Activated CD8-positive, alpha-beta T cell treated with anti-CD3 and anti-CD28 coated beads, Interleukin-2, amount 10 ng/mL, durations not matched to agents 7 days and 5 days (primary cell): ENCODE measurements at regions of chr17 and their contacts with region 1.

Region 1: DNA sequence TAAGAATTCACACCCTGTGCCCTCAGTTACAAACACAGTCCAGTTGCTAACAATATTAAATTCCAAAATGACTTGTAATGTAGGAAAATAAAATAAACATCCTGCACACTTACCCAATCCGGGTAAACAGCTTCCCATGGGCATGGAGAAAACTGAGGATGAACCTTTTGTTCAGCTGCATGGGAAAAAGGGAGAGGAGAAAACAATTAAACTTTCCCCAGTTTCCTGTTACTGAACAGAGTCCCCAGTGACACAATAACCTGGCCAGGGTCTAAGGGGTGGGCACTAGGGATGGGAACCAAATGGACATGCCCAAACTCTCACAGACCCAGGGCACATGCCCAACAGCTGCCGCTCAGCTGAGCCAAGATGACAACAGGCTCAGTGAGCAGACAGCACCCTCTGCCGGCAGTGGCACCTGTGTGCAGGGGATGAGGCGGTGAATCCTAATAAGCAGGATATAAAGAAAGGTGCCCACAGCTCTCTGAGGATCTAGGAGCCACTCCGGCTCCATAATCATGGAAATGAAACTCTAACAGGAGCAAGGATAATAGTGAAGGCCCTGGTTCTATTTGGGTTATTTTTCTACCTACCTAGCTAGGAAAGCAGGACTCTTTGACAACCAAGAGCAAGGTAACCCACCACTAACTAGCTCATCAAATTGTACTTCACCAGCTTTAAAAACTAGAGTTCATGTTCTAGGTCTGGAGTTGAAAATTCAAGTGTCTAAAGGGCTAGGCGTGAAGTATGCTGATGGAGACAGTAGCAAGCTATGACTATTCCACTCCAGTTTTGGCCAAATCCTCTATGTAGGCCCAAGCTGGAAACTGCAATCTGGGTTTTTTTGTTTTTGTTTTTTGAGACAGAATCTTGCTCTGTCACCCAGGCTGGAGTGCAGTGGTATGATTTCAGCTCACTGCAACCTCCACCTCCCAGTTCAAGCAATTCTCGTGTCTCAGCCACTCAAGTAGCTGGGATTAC is 58.8 kb downstream of the SMG6 start:
- DNase-seq: peak; percentile 88
- ATAC-seq: peak; percentile 93
- H3K4me3 Mint-ChIP-seq: no peak overlapping the region
- H3K27ac Mint-ChIP-seq: peak overlapping the region; percentile 72
- H3K4me1 Mint-ChIP-seq: peaks cover 86% of the 10 kb centered on the region
- H3K27me3 Mint-ChIP-seq: no peaks in the 10 kb centered on the region

Region 2: GRCh38 chr17:2070241-2071023 is 174.4 kb before region 1 on chr17:
- CTCF ChIA-PET with region 1: interaction called, 37 read pairs
- POLR2A ChIA-PET with region 1: interaction called, 4 read pairs
- DNase-seq: peak; percentile 78
- ATAC-seq: peak; percentile 82
- H3K4me3 Mint-ChIP-seq: peak overlapping the region; percentile 16
- H3K27ac Mint-ChIP-seq: peak overlapping the region; percentile 84
- H3K4me1 Mint-ChIP-seq: peaks cover 67% of the 10 kb centered on the region
- H3K27me3 Mint-ChIP-seq: no peaks in the 10 kb centered on the region

Region 3: GRCh38 chr17:2122641-2123302 is 122.1 kb before region 1 on chr17:
- CTCF ChIA-PET with region 1: interaction called, 13 read pairs
- POLR2A ChIA-PET with region 1: interaction called, 4 read pairs
- DNase-seq: no peak
- ATAC-seq: peak; percentile 57
- H3K4me3 Mint-ChIP-seq: no peak overlapping the region
- H3K27ac Mint-ChIP-seq: peak overlapping the region; percentile 77
- H3K4me1 Mint-ChIP-seq: peaks cover 27% of the 10 kb centered on the region
- H3K27me3 Mint-ChIP-seq: no peaks in the 10 kb centered on the region

Region 4: GRCh38 chr17:2192367-2193057 is 52.3 kb before region 1 on chr17:
- CTCF ChIA-PET with region 1: interaction called, 10 read pairs
- POLR2A ChIA-PET with region 1: no interaction called
- DNase-seq: peak; percentile 80
- ATAC-seq: peak; percentile 93
- H3K4me3 Mint-ChIP-seq: peak overlapping the region; percentile 52
- H3K27ac Mint-ChIP-seq: peak overlapping the region; percentile 83
- H3K4me1 Mint-ChIP-seq: peaks cover 80% of the 10 kb centered on the region
- H3K27me3 Mint-ChIP-seq: no peaks in the 10 kb centered on the region

Region 5: DNA sequence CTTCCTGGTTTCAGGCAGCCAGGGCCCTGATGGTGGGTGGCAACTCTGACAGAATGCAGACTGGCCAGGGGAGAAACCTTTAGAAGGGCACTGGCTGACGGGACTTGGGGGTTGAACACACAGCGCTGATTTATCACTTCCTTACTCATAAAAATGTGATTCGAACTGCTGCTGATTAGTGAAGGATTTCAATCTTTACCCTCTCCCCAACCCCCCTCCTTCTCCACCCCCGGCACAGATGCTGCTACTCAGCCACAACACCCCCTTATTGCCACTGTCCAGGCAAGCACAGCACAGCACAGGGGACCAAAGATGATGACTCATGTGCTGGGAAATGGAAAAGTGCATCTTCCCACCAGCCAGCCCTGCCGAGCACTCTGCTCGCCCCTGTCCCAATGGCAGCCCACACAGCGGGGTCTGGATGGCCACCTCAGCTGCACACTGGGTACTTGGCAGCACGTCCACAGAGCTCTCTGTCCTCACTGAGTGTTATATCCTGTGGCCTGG is 11.3 kb before region 1 on chr17:
- CTCF ChIA-PET with region 1: interaction called, 33 read pairs
- POLR2A ChIA-PET with region 1: no interaction called
- DNase-seq: no peak
- ATAC-seq: no peak
- H3K4me3 Mint-ChIP-seq: no peak overlapping the region
- H3K27ac Mint-ChIP-seq: peak overlapping the region; percentile 69
- H3K4me1 Mint-ChIP-seq: peaks cover 78% of the 10 kb centered on the region
- H3K27me3 Mint-ChIP-seq: no peaks in the 10 kb centered on the region

Region 6: DNA sequence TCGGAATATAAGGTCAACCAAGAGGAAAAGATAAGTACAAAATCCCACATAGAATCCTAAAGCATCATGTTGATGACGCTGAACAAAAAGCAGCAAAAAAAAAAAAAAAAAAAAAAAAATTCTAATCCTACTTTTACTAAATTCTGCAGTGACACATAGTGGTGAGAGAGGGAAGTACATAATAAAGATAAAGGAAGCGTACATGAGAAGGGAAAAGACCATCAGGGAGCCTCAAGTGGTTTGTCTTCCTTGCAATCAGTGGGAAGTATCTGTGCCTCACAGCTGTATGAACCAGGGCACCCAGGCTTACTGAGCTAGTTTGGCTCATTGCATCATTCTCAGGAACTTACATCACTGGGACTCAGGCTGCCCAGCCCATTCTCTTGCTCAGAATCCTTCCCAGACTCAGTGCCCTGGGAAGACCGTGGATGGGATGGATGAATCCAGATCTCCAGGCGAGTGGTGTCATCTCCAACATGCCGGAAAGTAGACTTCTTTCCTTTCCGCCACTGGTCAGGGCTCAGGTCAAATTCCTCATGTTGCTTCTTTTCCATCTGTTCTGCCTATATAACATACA is 37.5 kb after region 1 on chr17:
- CTCF ChIA-PET with region 1: interaction called, 61 read pairs
- POLR2A ChIA-PET with region 1: interaction called, 4 read pairs
- DNase-seq: no peak
- ATAC-seq: peak; percentile 54
- H3K4me3 Mint-ChIP-seq: no peak overlapping the region
- H3K27ac Mint-ChIP-seq: peak overlapping the region; percentile 76
- H3K4me1 Mint-ChIP-seq: peaks cover 50% of the 10 kb centered on the region
- H3K27me3 Mint-ChIP-seq: no peaks in the 10 kb centered on the region

Region 7: GRCh38 chr17:2323629-2324314 is 78.9 kb after region 1 on chr17:
- CTCF ChIA-PET with region 1: no interaction called
- POLR2A ChIA-PET with region 1: no interaction called
- DNase-seq: no peak
- ATAC-seq: no peak
- H3K4me3 Mint-ChIP-seq: no peak overlapping the region
- H3K27ac Mint-ChIP-seq: peak overlapping the region; percentile 67
- H3K4me1 Mint-ChIP-seq: peaks cover 19% of the 10 kb centered on the region
- H3K27me3 Mint-ChIP-seq: no peaks in the 10 kb centered on the region